Dendritic cell treated with granulocyte-macrophage colony-stimulating factor and Interleukin-4, amounts not matched to agents 40 ng/mL and 50 ng/mL, for 4 days (primary cell): ENCODE measurements at regions of chr7 and their contacts with region 1.

Region 1: GRCh38 chr7:102431617-102432298 is 1.6 kb upstream of the ORAI2 start:
- H3K4me3 Mint-ChIP-seq: no peak overlapping the region
- H3K27ac Mint-ChIP-seq: peak overlapping the region; percentile 72
- H3K4me1 Mint-ChIP-seq: peaks cover 61% of the 10 kb centered on the region
- H3K27me3 Mint-ChIP-seq: no peaks in the 10 kb centered on the region

Region 2: GRCh38 chr7:102318482-102319006 is 113.2 kb before region 1 on chr7:
- intact Hi-C with region 1: no loop called
- H3K4me3 Mint-ChIP-seq: no peak overlapping the region
- H3K27ac Mint-ChIP-seq: no peak overlapping the region
- H3K4me1 Mint-ChIP-seq: peaks cover 5% of the 10 kb centered on the region
- H3K27me3 Mint-ChIP-seq: no peaks in the 10 kb centered on the region

Region 3: GRCh38 chr7:102464577-102465280 is 33.0 kb after region 1 on chr7 and contains the starts of genes ALKBH4 and LRWD1:
- intact Hi-C with region 1: loop called (anchors 2 kb)
- H3K4me3 Mint-ChIP-seq: peak within 1 kb of the TSS; percentile 94
- H3K27ac Mint-ChIP-seq: peak within 1 kb of the TSS; percentile 91
- H3K4me1 Mint-ChIP-seq: peaks cover 40% of the 10 kb centered on the region
- H3K27me3 Mint-ChIP-seq: peaks cover 6% of the 10 kb centered on the region